ENCODE measurements at regions of chr6 and their contacts with region 1.

Region 1: DNA sequence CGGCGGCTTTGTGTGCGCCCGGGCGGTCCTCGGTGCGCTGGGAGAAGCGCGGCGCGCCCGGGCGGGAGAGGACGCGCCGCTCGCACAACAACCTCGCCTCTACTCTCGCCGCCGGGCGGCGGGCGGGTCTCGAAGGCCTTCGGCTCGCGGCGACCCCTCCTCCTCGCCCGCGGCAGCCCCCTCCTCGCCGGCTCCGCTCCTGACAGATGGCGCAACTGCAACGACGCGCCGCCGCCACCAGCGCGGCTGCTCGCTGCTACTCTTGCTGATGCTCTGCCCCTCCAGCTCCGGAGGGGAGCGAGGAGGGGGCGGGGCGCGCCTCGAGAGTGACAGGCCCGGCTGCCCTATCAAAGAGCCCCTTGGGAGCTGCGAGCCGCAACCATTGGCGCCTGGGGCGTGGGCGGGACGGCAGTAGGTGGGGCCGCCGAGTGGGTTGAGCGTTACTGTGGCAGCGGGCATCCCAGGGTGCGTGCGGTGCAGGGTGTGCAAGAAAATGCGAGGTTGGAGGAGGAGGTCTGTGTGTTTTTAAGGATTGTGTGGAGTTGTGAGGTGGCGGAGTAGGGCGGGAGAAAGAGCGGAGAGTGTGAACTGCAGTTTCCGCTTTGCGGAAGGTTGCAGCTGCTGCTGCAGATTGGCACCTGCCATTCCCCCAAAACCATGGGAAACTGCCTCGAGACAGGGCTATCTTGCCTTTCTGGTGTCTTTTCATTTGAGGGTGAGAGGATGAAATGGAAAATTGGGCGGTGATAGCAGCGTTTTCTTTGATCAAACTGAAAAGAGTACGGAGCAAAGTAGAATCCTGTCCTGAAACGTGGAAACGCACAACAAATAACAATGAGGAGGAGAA is at the start of gene FYN:
- DNase-seq: peak; percentile 97 to 100 (median 99)
- ATAC-seq: peak; percentile 96
- H3K4me3 ChIP-seq: peak within 1 kb of the TSS; percentile 89
- H3K4me3 Mint-ChIP-seq: peak within 1 kb of the TSS; percentile 95 to 100 (median 98)
- H3K27ac ChIP-seq: peak within 1 kb of the TSS; percentile 86
- H3K27ac Mint-ChIP-seq: peak within 1 kb of the TSS; percentile 93 to 99 (median 96)
- H3K4me1 ChIP-seq: peaks cover 32 to 34% of the 10 kb centered on the region in 2 donors
- H3K4me1 Mint-ChIP-seq: peaks cover 22 to 45% (median 38%) of the 10 kb centered on the region in 7 donors
- H3K27me3 ChIP-seq: no peaks in the 10 kb centered on the region
- H3K27me3 Mint-ChIP-seq: no peaks in the 10 kb centered on the region
- total RNA-seq, gene FYN: 200 to 720 (median 447) TPM

Region 2: DNA sequence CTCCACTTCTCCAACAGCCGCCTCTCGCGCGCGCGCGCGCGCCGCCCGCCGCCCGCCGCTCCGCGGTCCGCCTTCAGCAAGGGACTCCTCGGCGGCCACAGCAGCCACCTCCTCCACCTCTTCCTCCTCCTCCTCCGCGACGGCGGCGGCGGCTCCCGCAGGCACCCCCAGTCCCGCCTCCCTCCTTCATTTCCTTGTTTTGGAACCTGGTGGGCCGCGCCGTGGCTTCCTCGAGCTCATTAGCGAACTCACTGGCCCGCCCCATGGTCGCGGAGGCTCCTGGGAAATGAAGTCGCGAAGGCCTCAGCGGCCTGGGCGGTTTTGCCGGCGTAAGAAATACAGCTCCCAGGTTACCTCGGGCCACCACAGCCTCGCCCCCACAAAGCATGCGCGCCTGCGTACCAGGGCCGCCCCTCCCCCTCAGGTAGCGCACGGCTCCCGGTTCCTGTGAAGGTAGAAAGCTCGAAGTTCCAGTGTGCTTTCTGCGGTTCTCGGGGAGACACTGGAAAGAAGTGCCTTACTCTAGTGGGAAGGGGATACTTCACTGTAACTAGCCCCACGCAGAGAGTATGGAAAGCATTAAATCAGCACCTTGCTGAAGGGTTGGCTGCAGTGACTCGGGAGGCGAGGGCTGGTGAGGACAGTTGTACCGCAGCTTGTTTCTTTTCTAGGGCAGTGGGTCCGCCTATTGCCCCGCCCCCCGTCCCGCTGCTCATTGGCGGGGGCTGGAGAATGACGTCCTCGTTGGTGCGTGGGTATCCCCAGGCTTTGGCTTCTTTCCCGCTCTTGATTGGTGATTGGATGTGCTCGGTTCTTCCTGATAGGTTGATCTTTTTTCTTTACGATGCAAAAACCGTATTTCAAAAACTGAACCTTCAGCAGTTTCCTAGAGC is 1057.9 kb before region 1 on chr6 and contains the start of gene CDK19:
- CTCF ChIA-PET with region 1: no interaction called
- POLR2A ChIA-PET with region 1: no interaction called
- intact Hi-C with region 1: loop called in 1 of 2 experiments (anchors 5 kb)
- DNase-seq: peak; percentile 94 to 99 (median 99)
- ATAC-seq: peak; percentile 87
- H3K4me3 ChIP-seq: peak within 1 kb of the TSS; percentile 97
- H3K4me3 Mint-ChIP-seq: peak within 1 kb of the TSS; percentile 94 to 100 (median 98)
- H3K27ac ChIP-seq: peak within 1 kb of the TSS; percentile 89
- H3K27ac Mint-ChIP-seq: peak within 1 kb of the TSS; percentile 89 to 100 (median 99)
- H3K4me1 ChIP-seq: peaks cover 11 to 15% of the 10 kb centered on the region in 2 donors
- H3K4me1 Mint-ChIP-seq: peaks cover 14 to 46% (median 26%) of the 10 kb centered on the region in 7 donors
- H3K27me3 ChIP-seq: no peaks in the 10 kb centered on the region
- H3K27me3 Mint-ChIP-seq: no peaks in the 10 kb centered on the region
- total RNA-seq, gene CDK19: 11.3 to 24.4 (median 21.0) TPM

Region 3: GRCh38 chr6:111709615-111710398 is 163.6 kb before region 1 on chr6:
- CTCF ChIA-PET with region 1: interaction called, 5 read pairs
- POLR2A ChIA-PET with region 1: interaction called, 6 read pairs
- intact Hi-C with region 1: loop called (anchors 1 kb)
- DNase-seq: peak in 8 of 9 donors; percentile 43 to 78 (median 71)
- ATAC-seq: peak; percentile 89
- H3K4me3 ChIP-seq: no peak overlapping the region
- H3K4me3 Mint-ChIP-seq: peak overlapping the region in 8 of 10 donors; percentile 2 to 67 (median 53)
- H3K27ac ChIP-seq: peak overlapping the region; percentile 59
- H3K27ac Mint-ChIP-seq: peak overlapping the region; percentile 53 to 98 (median 93)
- H3K4me1 ChIP-seq: peaks cover 32 to 43% of the 10 kb centered on the region in 2 donors
- H3K4me1 Mint-ChIP-seq: peaks cover 32 to 64% (median 56%) of the 10 kb centered on the region in 7 donors
- H3K27me3 ChIP-seq: no peaks in the 10 kb centered on the region
- H3K27me3 Mint-ChIP-seq: no peaks in the 10 kb centered on the region

Region 4: GRCh38 chr6:111804627-111805235 is 68.7 kb before region 1 on chr6:
- CTCF ChIA-PET with region 1: no interaction called
- POLR2A ChIA-PET with region 1: interaction called, 4 read pairs
- intact Hi-C with region 1: loop called (anchors 1 kb)
- DNase-seq: peak in 8 of 9 donors; percentile 31 to 77 (median 56)
- ATAC-seq: peak; percentile 89
- H3K4me3 ChIP-seq: peak overlapping the region; percentile 7
- H3K4me3 Mint-ChIP-seq: peak overlapping the region; percentile 20 to 73 (median 64)
- H3K27ac ChIP-seq: peak overlapping the region; percentile 68
- H3K27ac Mint-ChIP-seq: peak overlapping the region; percentile 78 to 97 (median 92)
- H3K4me1 ChIP-seq: peaks cover 59 to 64% of the 10 kb centered on the region in 2 donors
- H3K4me1 Mint-ChIP-seq: peaks cover 54 to 96% (median 88%) of the 10 kb centered on the region in 7 donors
- H3K27me3 ChIP-seq: no peaks in the 10 kb centered on the region
- H3K27me3 Mint-ChIP-seq: no peaks in the 10 kb centered on the region

Region 5: DNA sequence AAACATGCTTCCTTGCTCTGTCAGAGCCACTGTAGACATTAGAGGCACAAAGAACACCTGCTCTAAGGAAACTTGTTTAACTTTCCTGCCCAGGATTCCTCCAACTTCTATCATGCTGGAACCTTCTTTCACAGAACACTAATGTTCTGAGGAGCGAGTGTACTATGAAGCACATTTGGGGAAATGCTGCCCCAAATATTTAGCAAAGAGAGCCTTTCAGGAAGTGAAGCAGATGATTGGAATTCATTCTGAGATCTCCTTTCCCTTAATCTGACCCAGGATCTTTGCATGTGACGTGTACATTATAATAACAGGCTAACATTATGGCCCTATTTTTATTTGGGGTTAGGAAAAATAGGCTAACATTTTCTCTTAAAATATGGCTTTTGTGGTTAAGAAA is 20.9 kb after region 1 on chr6:
- CTCF ChIA-PET with region 1: no interaction called
- POLR2A ChIA-PET with region 1: interaction called, 3 read pairs
- intact Hi-C with region 1: loop called in 1 of 2 experiments (anchors 2 kb)
- DNase-seq: no peak
- ATAC-seq: no peak
- H3K4me3 ChIP-seq: no peak overlapping the region
- H3K4me3 Mint-ChIP-seq: no peak overlapping the region
- H3K27ac ChIP-seq: no peak overlapping the region
- H3K27ac Mint-ChIP-seq: no peak overlapping the region
- H3K4me1 ChIP-seq: no peaks in the 10 kb centered on the region
- H3K4me1 Mint-ChIP-seq: peaks cover 0 to 3% (median 0%) of the 10 kb centered on the region in 7 donors
- H3K27me3 ChIP-seq: no peaks in the 10 kb centered on the region
- H3K27me3 Mint-ChIP-seq: peaks cover 0 to 11% (median 0%) of the 10 kb centered on the region in 5 donors

Region 6: GRCh38 chr6:111997078-111997852 is 123.9 kb after region 1 on chr6:
- CTCF ChIA-PET with region 1: interaction called, 12 read pairs
- POLR2A ChIA-PET with region 1: interaction called, 18 read pairs
- intact Hi-C with region 1: loop called (anchors 1 kb)
- DNase-seq: peak; percentile 60 to 82 (median 75)
- ATAC-seq: peak; percentile 89
- H3K4me3 ChIP-seq: peak overlapping the region; percentile 2
- H3K4me3 Mint-ChIP-seq: peak overlapping the region; percentile 58 to 91 (median 83)
- H3K27ac ChIP-seq: peak overlapping the region; percentile 55
- H3K27ac Mint-ChIP-seq: peak overlapping the region; percentile 44 to 97 (median 93)
- H3K4me1 ChIP-seq: peaks cover 19 to 45% of the 10 kb centered on the region in 2 donors
- H3K4me1 Mint-ChIP-seq: peaks cover 35 to 63% (median 50%) of the 10 kb centered on the region in 7 donors
- H3K27me3 ChIP-seq: no peaks in the 10 kb centered on the region
- H3K27me3 Mint-ChIP-seq: no peaks in the 10 kb centered on the region

Region 7: DNA sequence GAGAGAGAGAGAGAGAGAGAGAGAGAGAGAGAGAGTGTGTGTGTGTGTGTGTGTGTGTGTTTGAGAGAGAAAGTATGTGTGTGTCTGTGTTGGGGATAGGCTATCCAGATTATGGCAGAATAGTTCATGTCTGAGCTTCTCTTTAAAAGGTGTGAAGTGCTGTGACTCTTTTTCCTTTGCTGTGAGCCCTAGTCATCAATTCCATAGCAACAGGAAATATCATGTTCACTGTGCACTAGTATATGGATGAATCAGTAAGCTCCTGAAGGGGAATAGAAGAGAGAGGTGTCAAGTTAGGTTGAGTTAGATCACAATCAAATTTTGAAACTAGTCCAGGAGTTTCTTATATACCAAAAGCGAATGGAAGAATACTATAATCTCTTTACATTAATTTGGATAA is 792.4 kb after region 1 on chr6:
- CTCF ChIA-PET with region 1: no interaction called
- POLR2A ChIA-PET with region 1: no interaction called
- intact Hi-C with region 1: no loop called
- DNase-seq: no peak
- ATAC-seq: no peak
- H3K4me3 ChIP-seq: no peak overlapping the region
- H3K4me3 Mint-ChIP-seq: no peak overlapping the region
- H3K27ac ChIP-seq: no peak overlapping the region
- H3K27ac Mint-ChIP-seq: no peak overlapping the region
- H3K4me1 ChIP-seq: no peaks in the 10 kb centered on the region
- H3K4me1 Mint-ChIP-seq: peaks cover 0 to 2% (median 0%) of the 10 kb centered on the region in 7 donors
- H3K27me3 ChIP-seq: no peaks in the 10 kb centered on the region
- H3K27me3 Mint-ChIP-seq: no peaks in the 10 kb centered on the region